Prostate gland (tissue), 2 donors: ENCODE measurements at regions of chr2 and their contacts with region 1.

Region 1: GRCh38 chr2:121136323-121136722 is 148.7 kb downstream of the TFCP2L1 start:
- DNase-seq: no peak
- H3K4me3 ChIP-seq: no peak overlapping the region
- H3K27ac ChIP-seq: no peak overlapping the region
- H3K4me1 ChIP-seq: no peaks in the 10 kb centered on the region
- H3K27me3 ChIP-seq: no peaks in the 10 kb centered on the region
- CTCF ChIP-seq: no peak
- POLR2A ChIP-seq: no peak

Region 2: GRCh38 chr2:120779781-120780283 is 356.5 kb before region 1 on chr2:
- intact Hi-C with region 1: no loop called
- DNase-seq: no peak
- H3K4me3 ChIP-seq: no peak overlapping the region
- H3K27ac ChIP-seq: no peak overlapping the region
- H3K4me1 ChIP-seq: peaks cover 10% of the 10 kb centered on the region
- H3K27me3 ChIP-seq: no peaks in the 10 kb centered on the region
- CTCF ChIP-seq: no peak
- POLR2A ChIP-seq: no peak

Region 3: DNA sequence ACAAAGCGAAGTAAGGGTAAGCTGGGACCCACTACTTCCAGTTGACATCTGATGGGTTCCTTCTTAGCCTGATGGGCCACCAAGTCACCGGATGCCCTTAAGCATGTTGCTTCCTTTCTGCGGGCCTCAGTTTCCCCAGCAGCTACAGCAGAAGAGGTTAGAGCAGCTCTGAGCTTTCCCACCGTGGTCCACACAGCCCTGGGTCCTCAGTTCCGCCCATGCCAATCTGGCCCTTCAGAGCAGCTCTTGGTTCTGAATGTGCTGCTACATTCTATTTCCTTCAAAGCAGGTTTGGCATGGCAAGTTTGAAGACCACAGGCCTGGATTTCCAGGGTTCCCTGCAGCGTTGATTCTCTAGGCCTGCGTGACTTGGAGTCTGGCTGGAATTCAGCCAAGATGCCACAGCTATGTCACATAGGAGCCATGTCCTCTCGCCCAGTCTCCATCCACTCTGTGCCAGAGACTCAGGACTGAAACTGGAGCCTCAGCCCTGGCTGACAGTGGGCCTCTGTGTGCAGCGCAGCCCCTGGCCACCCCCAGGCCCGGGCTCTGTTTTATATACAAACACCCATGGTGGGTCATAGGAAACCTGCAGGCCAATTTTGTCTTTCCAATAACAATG is 69.1 kb after region 1 on chr2:
- intact Hi-C with region 1: no loop called
- DNase-seq: no peak
- H3K4me3 ChIP-seq: no peak overlapping the region
- H3K27ac ChIP-seq: no peak overlapping the region
- H3K4me1 ChIP-seq: no peaks in the 10 kb centered on the region
- H3K27me3 ChIP-seq: no peaks in the 10 kb centered on the region
- CTCF ChIP-seq: no peak
- POLR2A ChIP-seq: no peak

Region 4: GRCh38 chr2:122357995-122358394 is 1221.7 kb after region 1 on chr2:
- intact Hi-C with region 1: loop called (anchors 10 kb)
- DNase-seq: no peak
- H3K4me3 ChIP-seq: no peak overlapping the region
- H3K27ac ChIP-seq: no peak overlapping the region
- H3K4me1 ChIP-seq: no peaks in the 10 kb centered on the region
- H3K27me3 ChIP-seq: no peaks in the 10 kb centered on the region
- CTCF ChIP-seq: no peak
- POLR2A ChIP-seq: no peak